Breast epithelium (tissue), 4 donors: ENCODE measurements at regions of chr2 and their contacts with region 1.

Region 1: DNA sequence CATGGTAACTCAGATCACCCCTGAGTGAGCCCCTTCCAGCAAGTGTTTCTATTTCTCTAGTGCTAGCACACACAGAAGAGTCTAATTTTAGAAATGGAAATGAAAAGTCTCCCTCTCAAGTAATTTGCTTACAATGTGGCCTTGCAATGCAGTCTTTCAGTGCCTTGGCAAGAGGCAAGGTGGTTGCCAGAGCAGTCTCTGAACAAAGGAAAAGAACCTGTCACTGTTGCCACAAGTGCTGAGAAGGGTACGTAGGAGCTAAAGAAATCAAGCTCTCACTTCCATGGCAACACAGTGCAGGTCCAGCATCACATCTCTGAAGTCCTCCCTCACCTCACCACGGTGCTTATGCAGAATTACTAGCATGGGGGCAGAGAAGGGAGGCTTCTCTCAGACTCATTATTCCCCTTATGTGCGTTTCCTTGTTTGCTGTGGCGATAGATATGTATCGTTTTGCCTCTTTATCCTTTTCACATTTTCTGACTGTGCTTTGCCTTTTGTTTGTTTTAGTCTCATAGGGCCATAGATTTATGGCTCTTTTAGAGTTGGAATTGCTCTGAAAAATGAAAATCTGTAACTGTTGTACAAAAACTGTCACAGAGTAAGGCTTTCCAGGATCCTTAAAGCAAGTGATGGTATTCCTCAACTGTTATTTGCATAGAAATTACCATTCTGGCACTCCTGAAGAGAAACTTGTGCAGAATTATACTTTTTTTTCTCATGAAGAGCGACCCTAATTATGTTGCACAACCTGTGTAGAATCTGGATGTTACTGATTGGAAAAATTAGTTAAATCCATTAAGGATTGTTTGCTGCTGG is 164.8 kb downstream of the CCDC85A start:
- DNase-seq: no peak
- H3K4me3 ChIP-seq: no peak overlapping the region
- H3K27ac ChIP-seq: no peak overlapping the region
- H3K4me1 ChIP-seq: no peaks in the 10 kb centered on the region
- H3K27me3 ChIP-seq: no peaks in the 10 kb centered on the region
- CTCF ChIP-seq: no peak
- POLR2A ChIP-seq: no peak

Region 2: GRCh38 chr2:56313500-56313921 is 35.1 kb before region 1 on chr2:
- intact Hi-C with region 1: no loop called
- DNase-seq: no peak
- H3K4me3 ChIP-seq: no peak overlapping the region
- H3K27ac ChIP-seq: peak overlapping the region in 1 of 2 donors; percentile 13
- H3K4me1 ChIP-seq: no peaks in the 10 kb centered on the region
- H3K27me3 ChIP-seq: no peaks in the 10 kb centered on the region
- CTCF ChIP-seq: no peak
- POLR2A ChIP-seq: no peak

Region 3: DNA sequence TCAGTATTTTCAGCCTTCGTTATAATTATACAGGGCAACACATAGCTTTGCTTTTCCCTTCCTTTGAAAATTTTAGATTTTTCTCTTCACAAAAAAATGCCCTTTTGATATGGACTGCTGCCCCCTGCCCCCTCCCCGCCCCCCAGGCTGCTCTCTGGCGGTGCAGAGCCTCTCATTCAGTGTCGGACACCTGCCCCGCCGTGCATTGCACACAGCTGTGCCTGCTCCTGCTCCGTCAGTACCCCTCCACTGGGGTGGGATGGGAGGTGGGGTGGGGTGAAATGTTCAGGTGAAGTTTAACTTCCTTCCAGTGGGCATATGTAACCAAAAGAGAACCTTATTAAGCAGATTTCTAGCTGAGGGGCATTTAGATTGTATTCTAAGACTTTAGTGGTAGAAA is 16.8 kb before region 1 on chr2:
- intact Hi-C with region 1: loop called (anchors 1 kb)
- DNase-seq: no peak
- H3K4me3 ChIP-seq: no peak overlapping the region
- H3K27ac ChIP-seq: no peak overlapping the region
- H3K4me1 ChIP-seq: no peaks in the 10 kb centered on the region
- H3K27me3 ChIP-seq: no peaks in the 10 kb centered on the region
- CTCF ChIP-seq: no peak
- POLR2A ChIP-seq: no peak